PC-9 (cell line): ENCODE measurements at regions of chr12 and their contacts with region 1.

Region 1: DNA sequence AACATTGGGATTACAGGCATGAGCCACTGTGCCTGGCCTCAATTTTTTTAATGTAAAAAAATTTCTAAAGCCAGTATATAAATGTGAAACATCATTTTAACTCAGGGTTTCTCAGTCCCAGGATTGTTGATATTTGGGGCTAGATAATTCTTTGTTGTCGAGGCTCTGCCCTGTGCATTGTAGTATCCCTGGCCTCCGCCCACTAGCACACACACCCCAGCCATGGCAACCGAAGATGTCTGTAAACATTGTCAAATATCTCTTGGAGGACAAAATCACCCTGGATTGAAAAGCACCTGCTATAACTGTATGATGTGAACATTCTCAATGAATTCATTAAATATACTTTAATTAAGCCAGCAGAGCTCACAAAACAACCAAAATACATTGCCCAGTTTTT is 8.4 kb upstream of the CIT start:
- DNase-seq: no peak
- H3K4me3 ChIP-seq: no peak overlapping the region
- H3K27ac ChIP-seq: no peak overlapping the region
- H3K4me1 ChIP-seq: no peaks in the 10 kb centered on the region
- H3K27me3 ChIP-seq: no peaks in the 10 kb centered on the region
- CTCF ChIP-seq: no peak

Region 2: GRCh38 chr12:119870457-119870856 is 15.1 kb before region 1 on chr12:
- CTCF ChIA-PET with region 1: interaction called, 10 read pairs
- POLR2A ChIA-PET with region 1: no interaction called
- intact Hi-C with region 1: no loop called
- DNase-seq: no peak
- H3K4me3 ChIP-seq: no peak overlapping the region
- H3K27ac ChIP-seq: no peak overlapping the region
- H3K4me1 ChIP-seq: no peaks in the 10 kb centered on the region
- H3K27me3 ChIP-seq: no peaks in the 10 kb centered on the region
- CTCF ChIP-seq: no peak

Region 3: DNA sequence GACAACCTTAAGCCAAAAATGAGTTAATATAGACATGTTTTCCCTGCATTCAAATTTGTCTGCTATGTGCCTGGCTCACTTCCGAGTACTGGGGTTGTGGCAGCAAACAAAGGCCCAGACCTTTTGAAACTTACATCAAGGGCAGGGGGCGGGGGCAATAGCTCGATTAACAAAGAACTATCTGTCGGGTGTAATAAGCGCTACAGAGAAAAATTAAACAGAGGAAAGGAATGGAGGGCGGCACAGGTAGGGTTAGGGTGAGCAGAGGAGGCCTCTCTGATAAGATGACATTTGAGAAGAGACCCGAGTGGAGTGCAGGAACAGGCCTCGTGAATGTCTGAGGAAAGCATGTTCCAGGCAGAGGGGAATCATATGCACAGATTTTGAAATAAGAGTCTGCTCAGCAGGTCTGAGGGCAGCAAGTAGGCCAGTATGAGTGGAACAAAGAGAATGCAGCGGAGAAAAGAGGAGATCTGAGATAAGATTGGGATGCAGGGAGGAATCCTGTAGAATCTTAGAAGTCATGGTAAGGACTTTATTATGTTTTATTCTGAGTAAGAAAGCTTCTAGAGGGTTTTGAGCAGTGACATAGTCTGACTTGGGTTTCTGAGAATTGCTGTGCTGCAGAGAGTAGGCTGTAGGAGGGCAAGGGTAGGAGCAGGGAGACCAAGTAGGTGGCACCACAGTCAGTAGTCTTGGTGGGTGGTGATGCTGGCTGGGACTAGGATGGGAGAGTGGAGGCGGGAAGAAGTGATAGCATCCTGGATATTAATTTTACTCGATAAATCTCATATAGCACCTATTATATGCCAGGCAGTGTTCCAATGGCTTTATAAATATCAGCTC is 156.1 kb after region 1 on chr12:
- CTCF ChIA-PET with region 1: no interaction called
- POLR2A ChIA-PET with region 1: interaction called, 13 read pairs
- intact Hi-C with region 1: no loop called
- DNase-seq: no peak
- H3K4me3 ChIP-seq: no peak overlapping the region
- H3K27ac ChIP-seq: no peak overlapping the region
- H3K4me1 ChIP-seq: peaks cover 26% of the 10 kb centered on the region
- H3K27me3 ChIP-seq: no peaks in the 10 kb centered on the region
- CTCF ChIP-seq: no peak

Region 4: GRCh38 chr12:120055231-120056021 is 169.9 kb after region 1 on chr12:
- CTCF ChIA-PET with region 1: no interaction called
- POLR2A ChIA-PET with region 1: no interaction called
- intact Hi-C with region 1: no loop called
- DNase-seq: peak in 1 of 2 experiments; percentile 81
- H3K4me3 ChIP-seq: peak overlapping the region; percentile 8; the same call in 1 of the 2 replicates
- H3K27ac ChIP-seq: peak overlapping the region; percentile 92
- H3K4me1 ChIP-seq: peaks cover 42% of the 10 kb centered on the region
- H3K27me3 ChIP-seq: no peaks in the 10 kb centered on the region
- CTCF ChIP-seq: no peak